CD4-positive, alpha-beta T cell (primary cell): ENCODE measurements at regions of chr1 and their contacts with region 1.

Region 1: DNA sequence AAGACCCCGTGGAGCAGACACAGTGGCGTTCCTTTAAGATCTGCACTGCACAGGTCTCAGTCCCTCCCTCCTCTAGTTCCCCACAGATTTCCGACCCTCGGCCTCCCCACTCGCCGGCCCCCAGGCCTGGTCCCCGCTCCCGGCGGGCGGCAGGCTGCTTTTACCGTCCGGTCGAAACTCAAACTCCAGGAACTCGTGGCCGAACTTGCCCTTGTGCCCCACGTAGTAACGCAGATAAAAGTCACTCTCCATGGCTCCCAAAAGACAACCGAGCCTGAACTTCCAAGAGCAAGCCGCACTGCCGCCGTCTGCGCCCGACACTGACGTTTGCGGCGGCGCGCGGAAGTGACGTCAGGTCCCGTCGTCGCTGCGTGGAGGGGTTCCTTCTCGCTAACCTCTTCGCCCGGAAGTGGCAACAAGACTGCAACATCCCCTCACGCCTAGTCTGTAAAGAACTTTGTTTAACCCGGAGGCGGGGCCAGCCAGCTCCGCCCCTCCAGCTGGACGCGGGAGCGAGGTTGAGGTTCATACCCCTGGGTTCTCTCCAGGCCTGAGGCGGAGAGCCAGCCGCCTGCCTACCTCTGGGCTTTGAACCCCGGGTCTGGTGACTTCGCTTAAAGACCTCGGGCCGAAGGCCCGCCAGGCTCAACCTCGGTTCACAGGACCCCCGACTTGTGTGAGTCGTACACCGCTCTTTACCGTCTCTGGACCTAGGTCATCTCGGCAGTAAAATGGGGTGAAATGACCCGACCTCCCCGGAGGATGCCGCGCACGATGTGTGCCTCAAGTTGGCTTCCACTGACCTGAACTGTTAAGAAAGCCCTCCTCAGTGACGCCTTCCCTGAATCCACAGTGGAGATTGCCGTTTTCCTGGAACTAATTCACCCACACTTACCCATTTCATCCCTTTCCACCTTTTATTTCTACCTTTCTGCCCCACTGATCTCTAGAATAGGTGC is at the start of gene MAGOH:
- DNase-seq: peak; percentile 85 to 97 (median 93)
- ATAC-seq: peak; percentile 94
- H3K4me3 ChIP-seq: peak within 1 kb of the TSS; percentile 76
- H3K4me3 Mint-ChIP-seq: peak within 1 kb of the TSS; percentile 99
- H3K27ac ChIP-seq: peak within 1 kb of the TSS; percentile 69 to 84
- H3K27ac Mint-ChIP-seq: peak within 1 kb of the TSS; percentile 100
- H3K4me1 ChIP-seq: peaks cover 26% of the 10 kb centered on the region
- H3K4me1 Mint-ChIP-seq: peaks cover 40% of the 10 kb centered on the region
- H3K27me3 ChIP-seq: no peaks in the 10 kb centered on the region
- H3K27me3 Mint-ChIP-seq: no peaks in the 10 kb centered on the region
- CTCF ChIP-seq: no peak
- total RNA-seq, gene MAGOH: 59.1 to 65.2 TPM

Region 2: GRCh38 chr1:52927212-52928014 is 311.1 kb before region 1 on chr1 and contains the start of gene SCP2:
- CTCF ChIA-PET with region 1: no interaction called
- POLR2A ChIA-PET with region 1: no interaction called
- intact Hi-C with region 1: loop called in 1 of 2 experiments (anchors 5 kb)
- DNase-seq: peak; percentile 64 to 90 (median 79)
- ATAC-seq: peak; percentile 96
- H3K4me3 ChIP-seq: peak within 1 kb of the TSS; percentile 85
- H3K4me3 Mint-ChIP-seq: peak within 1 kb of the TSS; percentile 81
- H3K27ac ChIP-seq: no peak within 1 kb of the TSS
- H3K27ac Mint-ChIP-seq: peak within 1 kb of the TSS; percentile 38
- H3K4me1 ChIP-seq: peaks cover 23% of the 10 kb centered on the region
- H3K4me1 Mint-ChIP-seq: peaks cover 38% of the 10 kb centered on the region
- H3K27me3 ChIP-seq: no peaks in the 10 kb centered on the region
- H3K27me3 Mint-ChIP-seq: no peaks in the 10 kb centered on the region
- CTCF ChIP-seq: no peak
- total RNA-seq, gene SCP2: 22.7 to 27.0 TPM

Region 3: DNA sequence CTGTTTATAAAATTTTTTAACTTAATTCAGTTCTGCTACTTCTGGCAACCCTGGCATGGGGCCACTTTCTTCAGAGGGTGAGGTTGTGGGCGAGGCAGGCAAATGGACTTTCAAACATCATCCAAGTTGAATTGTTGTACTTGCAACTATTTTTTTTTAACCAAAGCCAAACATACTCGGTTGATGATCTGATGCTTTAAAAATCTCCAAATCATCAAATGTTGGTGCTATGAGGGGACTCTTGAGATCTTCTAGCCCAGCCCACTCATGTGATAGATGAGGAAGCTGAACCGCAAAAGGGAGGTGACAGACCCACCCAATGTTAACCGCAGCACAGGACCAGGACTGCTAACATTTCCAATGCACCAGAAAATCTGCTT is 102.8 kb before region 1 on chr1:
- CTCF ChIA-PET with region 1: no interaction called
- POLR2A ChIA-PET with region 1: no interaction called
- intact Hi-C with region 1: no loop called
- DNase-seq: peak in 2 of 14 experiments; percentile 11 to 65
- ATAC-seq: no peak
- H3K4me3 ChIP-seq: no peak overlapping the region
- H3K4me3 Mint-ChIP-seq: no peak overlapping the region
- H3K27ac ChIP-seq: no peak overlapping the region
- H3K27ac Mint-ChIP-seq: no peak overlapping the region
- H3K4me1 ChIP-seq: peaks cover 4% of the 10 kb centered on the region
- H3K4me1 Mint-ChIP-seq: no peaks in the 10 kb centered on the region
- H3K27me3 ChIP-seq: no peaks in the 10 kb centered on the region
- H3K27me3 Mint-ChIP-seq: no peaks in the 10 kb centered on the region
- CTCF ChIP-seq: no peak

Region 4: GRCh38 chr1:53196485-53197270 is 41.8 kb before region 1 on chr1 and contains the start of gene CPT2:
- CTCF ChIA-PET with region 1: no interaction called
- POLR2A ChIA-PET with region 1: interaction called, 5 read pairs
- intact Hi-C with region 1: loop called (anchors 2 kb)
- DNase-seq: peak; percentile 75 to 96 (median 89)
- ATAC-seq: peak; percentile 92
- H3K4me3 ChIP-seq: peak within 1 kb of the TSS; percentile 92
- H3K4me3 Mint-ChIP-seq: peak within 1 kb of the TSS; percentile 93
- H3K27ac ChIP-seq: peak within 1 kb of the TSS; percentile 93 to 97
- H3K27ac Mint-ChIP-seq: peak within 1 kb of the TSS; percentile 93
- H3K4me1 ChIP-seq: peaks cover 25% of the 10 kb centered on the region
- H3K4me1 Mint-ChIP-seq: peaks cover 29% of the 10 kb centered on the region
- H3K27me3 ChIP-seq: no peaks in the 10 kb centered on the region
- H3K27me3 Mint-ChIP-seq: no peaks in the 10 kb centered on the region
- CTCF ChIP-seq: no peak
- total RNA-seq, gene CPT2: 10.6 to 12.0 TPM

Region 5: GRCh38 chr1:53220171-53220961 is 18.1 kb before region 1 on chr1 and contains the start of gene CZIB:
- CTCF ChIA-PET with region 1: no interaction called
- POLR2A ChIA-PET with region 1: interaction called, 11 read pairs
- intact Hi-C with region 1: loop called in 1 of 2 experiments (anchors 1 kb)
- DNase-seq: peak; percentile 80 to 96 (median 89)
- ATAC-seq: peak; percentile 90
- H3K4me3 ChIP-seq: peak within 1 kb of the TSS; percentile 84
- H3K4me3 Mint-ChIP-seq: peak within 1 kb of the TSS; percentile 98
- H3K27ac ChIP-seq: peak within 1 kb of the TSS; percentile 95 to 96
- H3K27ac Mint-ChIP-seq: peak within 1 kb of the TSS; percentile 97
- H3K4me1 ChIP-seq: peaks cover 19% of the 10 kb centered on the region
- H3K4me1 Mint-ChIP-seq: peaks cover 35% of the 10 kb centered on the region
- H3K27me3 ChIP-seq: no peaks in the 10 kb centered on the region
- H3K27me3 Mint-ChIP-seq: no peaks in the 10 kb centered on the region
- CTCF ChIP-seq: no peak
- total RNA-seq, gene CZIB: 28.8 to 28.9 TPM

Region 6: GRCh38 chr1:53326088-53326597 is 87.7 kb after region 1 on chr1:
- CTCF ChIA-PET with region 1: no interaction called
- POLR2A ChIA-PET with region 1: interaction called, 4 read pairs
- intact Hi-C with region 1: loop called in 1 of 2 experiments (anchors 5 kb)
- DNase-seq: peak; percentile 69 to 94 (median 87)
- ATAC-seq: peak; percentile 78
- H3K4me3 ChIP-seq: peak overlapping the region; percentile 86
- H3K4me3 Mint-ChIP-seq: peak overlapping the region; percentile 83
- H3K27ac ChIP-seq: peak overlapping the region in 1 of 2 donors; percentile 65
- H3K27ac Mint-ChIP-seq: peak overlapping the region; percentile 79
- H3K4me1 ChIP-seq: peaks cover 26% of the 10 kb centered on the region
- H3K4me1 Mint-ChIP-seq: peaks cover 17% of the 10 kb centered on the region
- H3K27me3 ChIP-seq: no peaks in the 10 kb centered on the region
- H3K27me3 Mint-ChIP-seq: no peaks in the 10 kb centered on the region
- CTCF ChIP-seq: no peak

Region 7: GRCh38 chr1:53625049-53625448 is 386.6 kb after region 1 on chr1:
- CTCF ChIA-PET with region 1: no interaction called
- POLR2A ChIA-PET with region 1: no interaction called
- intact Hi-C with region 1: no loop called
- DNase-seq: no peak
- ATAC-seq: no peak
- H3K4me3 ChIP-seq: no peak overlapping the region
- H3K4me3 Mint-ChIP-seq: no peak overlapping the region
- H3K27ac ChIP-seq: no peak overlapping the region
- H3K27ac Mint-ChIP-seq: no peak overlapping the region
- H3K4me1 ChIP-seq: no peaks in the 10 kb centered on the region
- H3K4me1 Mint-ChIP-seq: no peaks in the 10 kb centered on the region
- H3K27me3 ChIP-seq: no peaks in the 10 kb centered on the region
- H3K27me3 Mint-ChIP-seq: no peaks in the 10 kb centered on the region
- CTCF ChIP-seq: no peak